Activated B cell treated with CpG ODN at 0.5 μM for 24 hours (primary cell): ENCODE measurements at regions of chr1 and their contacts with region 1.

Region 1: GRCh38 chr1:121519042-121519755 is 334.4 kb downstream of the SRGAP2C start:
- DNase-seq: peak; percentile 74
- ATAC-seq: peak; percentile 85
- H3K4me3 Mint-ChIP-seq: peak overlapping the region; percentile 86
- H3K27ac Mint-ChIP-seq: peak overlapping the region; percentile 94
- H3K4me1 Mint-ChIP-seq: peaks cover 44% of the 10 kb centered on the region
- H3K27me3 Mint-ChIP-seq: no peaks in the 10 kb centered on the region
- CTCF ChIP-seq: no peak

Region 2: GRCh38 chr1:121408354-121408753 is 110.8 kb before region 1 on chr1:
- CTCF ChIA-PET with region 1: no interaction called
- POLR2A ChIA-PET with region 1: no interaction called
- intact Hi-C with region 1: no loop called
- DNase-seq: no peak
- ATAC-seq: peak; percentile 60
- H3K4me3 Mint-ChIP-seq: no peak overlapping the region
- H3K27ac Mint-ChIP-seq: peak overlapping the region; percentile 42
- H3K4me1 Mint-ChIP-seq: peaks cover 12% of the 10 kb centered on the region
- H3K27me3 Mint-ChIP-seq: no peaks in the 10 kb centered on the region
- CTCF ChIP-seq: no peak

Region 3: GRCh38 chr1:121444096-121444495 is 75.1 kb before region 1 on chr1:
- CTCF ChIA-PET with region 1: interaction called, 4 read pairs
- POLR2A ChIA-PET with region 1: interaction called, 8 read pairs
- intact Hi-C with region 1: loop called (anchors 1 kb)
- DNase-seq: no peak
- ATAC-seq: no peak
- H3K4me3 Mint-ChIP-seq: no peak overlapping the region
- H3K27ac Mint-ChIP-seq: no peak overlapping the region
- H3K4me1 Mint-ChIP-seq: no peaks in the 10 kb centered on the region
- H3K27me3 Mint-ChIP-seq: no peaks in the 10 kb centered on the region
- CTCF ChIP-seq: no peak

Region 4: DNA sequence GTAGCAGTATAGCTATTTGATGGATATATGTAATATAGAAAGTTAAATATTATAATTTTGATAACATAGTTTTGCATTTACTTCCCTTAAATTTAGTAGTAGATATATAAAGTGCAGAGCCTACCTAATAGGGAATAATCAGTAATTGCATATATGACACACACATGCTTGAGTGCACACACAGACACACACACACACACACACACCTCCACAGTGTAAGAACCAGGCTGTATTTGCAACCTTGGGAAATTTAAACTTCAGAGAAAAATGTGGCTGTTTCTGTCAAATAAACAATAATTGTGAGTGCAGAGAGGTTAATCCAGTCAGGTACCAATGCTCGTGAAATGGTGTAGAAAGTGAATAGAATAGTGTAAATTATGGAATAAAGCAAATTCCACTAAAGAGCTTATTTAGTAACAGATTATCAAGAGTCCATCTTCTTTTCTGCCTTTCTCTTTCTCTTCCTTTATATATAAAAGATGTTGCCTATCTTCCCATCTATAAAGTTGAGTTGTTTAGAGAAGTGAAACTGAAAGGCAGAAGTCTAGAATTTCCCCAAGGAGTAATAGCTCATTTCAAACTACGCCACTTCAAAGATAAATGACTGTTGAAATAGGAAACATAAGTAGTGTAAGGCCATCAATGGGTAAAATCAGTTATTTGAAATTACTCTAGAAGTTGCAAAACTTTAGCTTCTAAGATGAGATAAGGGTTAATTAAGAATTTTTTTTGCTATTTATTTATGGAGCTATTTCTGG is 60.7 kb before region 1 on chr1:
- CTCF ChIA-PET with region 1: interaction called, 5 read pairs
- POLR2A ChIA-PET with region 1: interaction called, 27 read pairs
- intact Hi-C with region 1: loop called (anchors 1 kb)
- DNase-seq: no peak
- ATAC-seq: peak; percentile 97
- H3K4me3 Mint-ChIP-seq: peak overlapping the region; percentile 64
- H3K27ac Mint-ChIP-seq: peak overlapping the region; percentile 85
- H3K4me1 Mint-ChIP-seq: peaks cover 13% of the 10 kb centered on the region
- H3K27me3 Mint-ChIP-seq: no peaks in the 10 kb centered on the region
- CTCF ChIP-seq: no peak

Region 5: DNA sequence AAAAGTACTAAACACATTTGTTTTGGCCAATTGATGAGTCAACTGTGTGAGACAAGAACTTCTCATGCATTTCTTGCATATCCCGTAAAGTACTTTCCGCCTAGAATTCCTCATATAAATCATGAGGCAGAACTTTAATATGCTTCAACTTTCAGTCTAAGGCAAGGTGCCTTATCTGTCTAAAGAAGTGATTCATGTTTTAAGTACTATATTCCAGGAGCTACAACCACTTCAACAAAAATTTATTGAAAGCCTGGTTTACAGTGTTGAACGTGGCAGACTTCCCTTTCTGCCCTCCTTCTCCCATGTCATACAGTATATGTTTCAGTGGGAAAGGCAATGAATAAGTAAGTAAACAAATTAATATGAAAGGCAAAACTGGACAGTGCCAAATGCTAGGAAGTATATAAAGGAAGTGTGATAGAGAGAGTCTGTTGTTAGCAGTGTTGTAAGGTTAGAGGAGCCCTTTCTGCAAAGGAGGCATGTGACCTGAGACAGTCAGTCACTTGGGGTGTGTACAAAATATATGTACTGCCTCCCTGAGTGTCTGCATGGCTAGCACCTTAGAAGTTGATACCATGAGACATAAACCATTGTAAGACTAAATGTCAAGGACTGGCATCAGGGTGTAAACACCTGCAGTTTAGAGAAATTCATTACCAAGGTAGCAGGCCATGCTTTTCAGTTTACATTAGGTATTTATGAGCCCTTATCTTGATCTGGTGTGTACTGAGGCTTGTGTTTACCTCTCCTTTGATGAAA is 27.8 kb after region 1 on chr1:
- CTCF ChIA-PET with region 1: no interaction called
- POLR2A ChIA-PET with region 1: no interaction called
- intact Hi-C with region 1: loop called (anchors 2 kb)
- DNase-seq: no peak
- ATAC-seq: no peak
- H3K4me3 Mint-ChIP-seq: no peak overlapping the region
- H3K27ac Mint-ChIP-seq: no peak overlapping the region
- H3K4me1 Mint-ChIP-seq: peaks cover 18% of the 10 kb centered on the region
- H3K27me3 Mint-ChIP-seq: no peaks in the 10 kb centered on the region
- CTCF ChIP-seq: no peak